MCF 10A (cell line): ENCODE measurements at regions of chr6 and their contacts with region 1.

Region 1: DNA sequence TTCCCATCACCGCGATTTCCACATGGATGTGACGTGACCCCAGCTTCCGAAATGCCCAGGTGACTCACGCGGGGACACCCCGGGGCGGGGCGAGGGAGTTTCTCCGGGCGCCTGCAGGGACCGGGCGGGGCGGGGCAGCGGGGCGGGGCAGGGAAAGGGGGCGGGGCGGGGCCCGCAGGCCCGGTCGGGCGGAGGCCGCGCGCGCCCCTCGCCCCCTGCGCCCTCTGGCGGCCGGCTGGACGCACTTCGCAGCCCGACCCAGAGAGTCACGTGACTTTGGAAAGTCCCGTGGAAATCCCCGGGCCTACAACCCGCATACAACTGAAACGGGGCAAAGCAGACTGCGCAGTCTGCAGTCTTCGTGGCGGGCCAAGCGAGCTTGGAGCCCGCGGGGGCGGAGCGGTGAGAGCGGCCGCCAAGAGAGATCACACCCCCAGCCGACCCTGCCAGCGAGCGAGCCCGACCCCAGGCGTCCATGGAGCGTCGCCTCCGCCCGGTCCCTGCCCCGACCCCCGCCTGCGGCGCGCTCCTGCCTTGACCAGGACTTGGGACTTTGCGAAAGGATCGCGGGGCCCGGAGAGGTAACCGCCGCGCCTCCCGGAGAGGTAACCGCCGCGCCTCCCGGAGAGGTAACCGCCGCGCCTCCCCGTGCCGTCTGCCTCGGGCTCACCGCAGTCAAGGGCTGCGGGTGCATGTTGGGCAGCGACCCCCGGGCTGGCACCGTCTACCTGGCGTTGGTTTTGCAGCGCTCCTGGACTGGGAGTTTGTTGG is at the start of gene TNFAIP3:
- DNase-seq: peak; percentile 96
- H3K4me3 Mint-ChIP-seq: peak within 1 kb of the TSS; percentile 72
- H3K27ac Mint-ChIP-seq: peak within 1 kb of the TSS; percentile 89
- H3K4me1 Mint-ChIP-seq: peaks cover 17% of the 10 kb centered on the region
- H3K27me3 Mint-ChIP-seq: no peaks in the 10 kb centered on the region
- CTCF ChIP-seq: peak; percentile 74
- total RNA-seq, gene TNFAIP3: 38.2 and 52.8 TPM in 2 replicates

Region 2: GRCh38 chr6:137707590-137708360 is 159.3 kb before region 1 on chr6:
- CTCF ChIA-PET with region 1: interaction called, 14 read pairs
- POLR2A ChIA-PET with region 1: interaction called, 20 read pairs
- intact Hi-C with region 1: loop called (anchors 1 kb)
- DNase-seq: peak; percentile 88
- H3K4me3 Mint-ChIP-seq: peak overlapping the region; percentile 60
- H3K27ac Mint-ChIP-seq: peak overlapping the region; percentile 67
- H3K4me1 Mint-ChIP-seq: peaks cover 14% of the 10 kb centered on the region
- H3K27me3 Mint-ChIP-seq: no peaks in the 10 kb centered on the region
- CTCF ChIP-seq: peak; percentile 64

Region 3: DNA sequence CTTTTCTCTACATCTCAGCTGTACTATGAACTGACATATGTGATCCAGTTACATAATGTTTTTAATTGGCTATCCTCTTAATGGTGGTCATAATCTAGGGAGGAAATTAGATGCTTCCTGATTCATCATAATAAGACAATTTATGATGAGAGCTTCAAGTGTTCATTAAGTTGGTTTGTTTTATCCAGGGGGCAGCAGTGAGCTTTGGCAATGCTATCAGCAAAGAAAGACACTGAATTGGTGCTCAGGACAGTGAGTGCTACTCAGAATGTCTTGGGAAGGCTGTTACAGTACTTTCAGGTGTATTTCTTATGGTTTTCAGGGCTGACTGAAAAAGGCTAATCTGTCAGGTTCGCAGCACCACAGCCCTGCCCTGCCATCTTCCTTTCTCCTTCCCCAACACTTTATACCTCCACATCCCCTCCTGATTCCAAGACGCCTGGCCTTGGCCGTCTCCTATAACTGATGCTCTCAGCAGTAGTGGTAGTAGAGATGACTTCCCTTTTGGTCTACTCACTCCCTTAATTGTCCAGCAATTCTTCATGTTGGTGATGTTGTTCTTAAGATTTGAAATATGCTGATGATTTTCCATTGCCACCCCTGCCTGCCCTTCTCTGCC is 67.0 kb before region 1 on chr6:
- CTCF ChIA-PET with region 1: interaction called, 23 read pairs
- POLR2A ChIA-PET with region 1: interaction called, 13 read pairs
- intact Hi-C with region 1: loop called (anchors 1 kb)
- DNase-seq: peak; percentile 84
- H3K4me3 Mint-ChIP-seq: no peak overlapping the region
- H3K27ac Mint-ChIP-seq: no peak overlapping the region
- H3K4me1 Mint-ChIP-seq: peaks cover 30% of the 10 kb centered on the region
- H3K27me3 Mint-ChIP-seq: no peaks in the 10 kb centered on the region
- CTCF ChIP-seq: peak; percentile 56

Region 4: DNA sequence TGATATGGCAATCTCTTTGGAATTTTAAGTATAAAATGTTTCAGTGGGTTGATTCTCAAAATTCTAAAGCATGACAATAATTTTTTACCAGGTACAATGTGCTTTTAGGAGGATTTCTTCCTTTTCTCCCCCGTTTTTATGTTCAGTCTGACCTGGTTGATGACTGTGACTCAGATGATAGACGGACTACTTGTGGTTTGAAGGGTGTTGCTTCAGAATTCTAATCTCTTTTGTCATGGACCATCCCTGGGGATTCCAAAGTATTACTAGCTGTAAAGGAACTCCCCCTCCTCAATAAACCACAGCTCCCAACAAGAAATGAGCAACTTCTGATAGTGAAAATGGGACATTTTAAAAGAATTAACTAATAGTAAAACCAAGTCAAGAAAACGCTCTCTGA is 35.0 kb before region 1 on chr6:
- CTCF ChIA-PET with region 1: interaction called, 4 read pairs
- POLR2A ChIA-PET with region 1: interaction called, 7 read pairs
- intact Hi-C with region 1: loop called (anchors 2 kb)
- DNase-seq: peak; percentile 76
- H3K4me3 Mint-ChIP-seq: peak overlapping the region; percentile 33
- H3K27ac Mint-ChIP-seq: peak overlapping the region; percentile 90
- H3K4me1 Mint-ChIP-seq: peaks cover 54% of the 10 kb centered on the region
- H3K27me3 Mint-ChIP-seq: no peaks in the 10 kb centered on the region
- CTCF ChIP-seq: no peak

Region 5: GRCh38 chr6:137944793-137945498 is 77.8 kb after region 1 on chr6:
- CTCF ChIA-PET with region 1: interaction called, 112 read pairs
- POLR2A ChIA-PET with region 1: interaction called, 90 read pairs
- intact Hi-C with region 1: loop called (anchors 1 kb)
- DNase-seq: peak; percentile 55
- H3K4me3 Mint-ChIP-seq: no peak overlapping the region
- H3K27ac Mint-ChIP-seq: peak overlapping the region; percentile 82
- H3K4me1 Mint-ChIP-seq: peaks cover 19% of the 10 kb centered on the region
- H3K27me3 Mint-ChIP-seq: no peaks in the 10 kb centered on the region
- CTCF ChIP-seq: peak; percentile 72